GM12878 (cell line): ENCODE measurements at regions of chr19 and their contacts with region 1.

Region 1: GRCh38 chr19:40465557-40466150 is at the start of gene BLVRB:
- DNase-seq: peak; percentile 96
- ATAC-seq: peak; percentile 89
- H3K4me3 ChIP-seq: peak within 1 kb of the TSS; percentile 66
- H3K27ac ChIP-seq: peak within 1 kb of the TSS; percentile 61
- H3K4me1 ChIP-seq: peaks cover 31% of the 10 kb centered on the region
- H3K27me3 ChIP-seq: peaks cover 0 to 2% of the 10 kb centered on the region in 2 experiments; a peak in 3 of 4 replicates
- CTCF ChIP-seq: no peak
- EP300 ChIP-seq: no peak
- POLR2A ChIP-seq: peak; percentile 87
- RAD21 ChIP-seq: no peak
- polyA plus RNA-seq, gene BLVRB: 6.3 to 16.3 TPM

Region 2: GRCh38 chr19:40425450-40426287 is 40.0 kb before region 1 on chr19 and contains the start of gene SERTAD1:
- CTCF ChIA-PET with region 1: interaction called, 67 read pairs
- POLR2A ChIA-PET with region 1: interaction called, 7 read pairs
- RAD21 ChIA-PET with region 1: interaction called, 26 read pairs
- SMC1A ChIA-PET with region 1: interaction called, 7 read pairs
- in situ Hi-C with region 1: no loop called
- intact Hi-C with region 1: no loop called
- DNase-seq: peak; percentile 96
- ATAC-seq: peak; percentile 90
- H3K4me3 ChIP-seq: peak within 1 kb of the TSS; percentile 97
- H3K27ac ChIP-seq: peak within 1 kb of the TSS; percentile 84
- H3K4me1 ChIP-seq: no peaks in the 10 kb centered on the region
- H3K27me3 ChIP-seq: no peaks in the 10 kb centered on the region
- CTCF ChIP-seq: peak; percentile 53 to 89 (median 58)
- EP300 ChIP-seq: no peak
- POLR2A ChIP-seq: peak; percentile 99
- RAD21 ChIP-seq: no peak
- polyA plus RNA-seq, gene SERTAD1: 0.23 to 1.6 TPM

Region 3: DNA sequence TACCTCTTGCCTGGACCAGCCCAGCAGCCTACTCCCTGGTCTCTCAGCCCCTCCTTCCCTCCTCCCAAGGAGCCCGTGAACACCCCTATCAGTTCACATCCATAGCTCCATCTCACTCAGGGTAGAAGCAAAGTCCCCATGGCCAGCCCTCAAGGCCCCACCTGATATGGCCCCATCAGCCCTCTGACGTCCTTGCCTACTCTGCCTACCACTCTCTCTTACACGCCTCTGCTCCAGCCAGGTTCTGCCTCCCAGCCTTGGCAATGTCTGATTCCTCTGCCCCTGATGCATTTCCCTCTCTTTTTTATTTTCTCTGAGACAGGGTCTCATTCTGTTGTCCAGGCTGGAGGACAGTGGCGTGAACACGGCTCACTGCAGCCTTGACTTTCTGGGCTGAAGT is 13.6 kb before region 1 on chr19:
- CTCF ChIA-PET with region 1: interaction called, 33 read pairs
- POLR2A ChIA-PET with region 1: interaction called, 10 read pairs
- RAD21 ChIA-PET with region 1: interaction called, 4 read pairs
- SMC1A ChIA-PET with region 1: interaction called, 14 read pairs
- in situ Hi-C with region 1: no loop called
- intact Hi-C with region 1: no loop called
- DNase-seq: no peak
- ATAC-seq: no peak
- H3K4me3 ChIP-seq: no peak overlapping the region
- H3K27ac ChIP-seq: no peak overlapping the region
- H3K4me1 ChIP-seq: no peaks in the 10 kb centered on the region
- H3K27me3 ChIP-seq: no peaks in the 10 kb centered on the region
- CTCF ChIP-seq: no peak
- EP300 ChIP-seq: no peak
- POLR2A ChIP-seq: no peak
- RAD21 ChIP-seq: no peak

Region 4: GRCh38 chr19:40598121-40598917 is 132.7 kb after region 1 on chr19:
- CTCF ChIA-PET with region 1: interaction called, 21 read pairs
- POLR2A ChIA-PET with region 1: no interaction called
- RAD21 ChIA-PET with region 1: interaction called, 4 read pairs
- SMC1A ChIA-PET with region 1: interaction called, 6 read pairs
- in situ Hi-C with region 1: no loop called
- intact Hi-C with region 1: loop called (anchors 2 kb)
- DNase-seq: no peak
- ATAC-seq: peak; percentile 84
- H3K4me3 ChIP-seq: no peak overlapping the region
- H3K27ac ChIP-seq: no peak overlapping the region
- H3K4me1 ChIP-seq: peaks cover 11% of the 10 kb centered on the region
- H3K27me3 ChIP-seq: peaks cover 11 to 14% of the 10 kb centered on the region in 2 experiments
- CTCF ChIP-seq: peak; percentile 98 to 99 (median 98); a peak in 5 of 6 replicates
- EP300 ChIP-seq: no peak
- POLR2A ChIP-seq: no peak
- RAD21 ChIP-seq: peak; percentile 98

Region 5: GRCh38 chr19:40633207-40633606 is 167.6 kb after region 1 on chr19:
- CTCF ChIA-PET with region 1: interaction called, 40 read pairs
- POLR2A ChIA-PET with region 1: no interaction called
- RAD21 ChIA-PET with region 1: interaction called, 12 read pairs
- SMC1A ChIA-PET with region 1: interaction called, 5 read pairs
- in situ Hi-C with region 1: no loop called
- intact Hi-C with region 1: no loop called
- DNase-seq: no peak
- ATAC-seq: no peak
- H3K4me3 ChIP-seq: no peak overlapping the region
- H3K27ac ChIP-seq: no peak overlapping the region
- H3K4me1 ChIP-seq: no peaks in the 10 kb centered on the region
- H3K27me3 ChIP-seq: no peaks in the 10 kb centered on the region
- CTCF ChIP-seq: no peak
- EP300 ChIP-seq: no peak
- POLR2A ChIP-seq: no peak
- RAD21 ChIP-seq: no peak